ENCODE measurements at regions of chr4 and their contacts with region 1.

Region 1: GRCh38 chr4:139301113-139301820 is at the start of gene NAA15:
- DNase-seq: peak; percentile 98
- ATAC-seq: peak; percentile 86 to 90 (median 88)
- H3K4me3 ChIP-seq: peak within 1 kb of the TSS; percentile 99
- H3K27ac ChIP-seq: peak within 1 kb of the TSS; percentile 99
- H3K4me1 ChIP-seq: peaks cover 40% of the 10 kb centered on the region
- H3K27me3 ChIP-seq: no peaks in the 10 kb centered on the region
- CTCF ChIP-seq: no peak
- total RNA-seq, gene NAA15: 31.9 to 53.7 (median 48.9) TPM

Region 2: GRCh38 chr4:139266583-139267257 is 34.5 kb before region 1 on chr4:
- intact Hi-C with region 1: loop called in 1 of 2 experiments (anchors 5 kb)
- DNase-seq: peak; percentile 76 to 87
- ATAC-seq: peak; percentile 94 to 99 (median 98)
- H3K4me3 ChIP-seq: peak overlapping the region; percentile 64
- H3K27ac ChIP-seq: peak overlapping the region; percentile 75
- H3K4me1 ChIP-seq: peaks cover 6% of the 10 kb centered on the region
- H3K27me3 ChIP-seq: no peaks in the 10 kb centered on the region
- CTCF ChIP-seq: no peak

Region 3: GRCh38 chr4:139593091-139593564 is 291.9 kb after region 1 on chr4:
- intact Hi-C with region 1: no loop called
- DNase-seq: no peak
- ATAC-seq: peak in 2 of 4 donors; percentile 23 to 59
- H3K4me3 ChIP-seq: no peak overlapping the region
- H3K27ac ChIP-seq: no peak overlapping the region
- H3K4me1 ChIP-seq: no peaks in the 10 kb centered on the region
- H3K27me3 ChIP-seq: no peaks in the 10 kb centered on the region
- CTCF ChIP-seq: no peak

Region 4: GRCh38 chr4:140359562-140360427 is 1058.5 kb after region 1 on chr4:
- intact Hi-C with region 1: no loop called
- DNase-seq: peak; percentile 58 to 68
- ATAC-seq: peak; percentile 68 to 91 (median 80)
- H3K4me3 ChIP-seq: no peak overlapping the region
- H3K27ac ChIP-seq: no peak overlapping the region
- H3K4me1 ChIP-seq: no peaks in the 10 kb centered on the region
- H3K27me3 ChIP-seq: no peaks in the 10 kb centered on the region
- CTCF ChIP-seq: peak; percentile 74